ENCODE measurements at regions of chr15 and their contacts with region 1.

Region 1: GRCh38 chr15:101381671-101382212 is 86.7 kb upstream of the SNRPA1 start:
- DNase-seq: peak; percentile 58

Region 2: DNA sequence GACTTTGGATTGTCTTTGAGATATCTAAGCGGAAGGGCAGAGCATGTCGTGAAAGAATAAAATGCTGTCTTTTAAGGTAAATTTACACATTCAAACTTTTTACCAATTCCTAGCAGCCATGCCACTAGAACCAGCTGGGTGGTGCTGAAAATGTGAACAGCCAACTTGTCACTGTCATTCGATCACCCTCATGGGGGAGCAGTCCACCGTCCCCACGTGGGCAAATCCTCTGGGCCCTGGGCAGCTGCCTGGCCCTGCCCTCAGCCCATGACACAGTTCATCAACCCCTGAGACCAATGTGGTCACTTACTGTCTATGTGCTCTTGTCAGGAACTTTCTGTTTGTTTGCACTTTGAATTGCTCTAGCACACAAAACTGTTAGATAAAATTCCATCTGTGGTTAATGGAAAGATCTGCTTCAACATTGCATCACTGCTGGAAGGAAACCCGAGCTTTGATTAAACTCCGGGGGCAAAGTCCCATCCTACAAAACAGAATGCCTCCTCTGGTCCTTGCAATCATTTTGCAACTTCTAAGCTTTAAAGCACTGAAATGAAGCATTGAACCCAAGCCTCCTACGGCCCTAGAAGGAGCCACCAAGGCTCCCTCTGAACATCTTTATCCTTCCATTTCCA is 57.7 kb after region 1 on chr15:
- intact Hi-C with region 1: loop called in 1 of 2 experiments (anchors 10 kb)
- DNase-seq: no peak

Measured in posterior vena cava (tissue), 2 donors.